Stomach (tissue), 19 donors: ENCODE measurements at regions of chr5 and their contacts with region 1.

Region 1: DNA sequence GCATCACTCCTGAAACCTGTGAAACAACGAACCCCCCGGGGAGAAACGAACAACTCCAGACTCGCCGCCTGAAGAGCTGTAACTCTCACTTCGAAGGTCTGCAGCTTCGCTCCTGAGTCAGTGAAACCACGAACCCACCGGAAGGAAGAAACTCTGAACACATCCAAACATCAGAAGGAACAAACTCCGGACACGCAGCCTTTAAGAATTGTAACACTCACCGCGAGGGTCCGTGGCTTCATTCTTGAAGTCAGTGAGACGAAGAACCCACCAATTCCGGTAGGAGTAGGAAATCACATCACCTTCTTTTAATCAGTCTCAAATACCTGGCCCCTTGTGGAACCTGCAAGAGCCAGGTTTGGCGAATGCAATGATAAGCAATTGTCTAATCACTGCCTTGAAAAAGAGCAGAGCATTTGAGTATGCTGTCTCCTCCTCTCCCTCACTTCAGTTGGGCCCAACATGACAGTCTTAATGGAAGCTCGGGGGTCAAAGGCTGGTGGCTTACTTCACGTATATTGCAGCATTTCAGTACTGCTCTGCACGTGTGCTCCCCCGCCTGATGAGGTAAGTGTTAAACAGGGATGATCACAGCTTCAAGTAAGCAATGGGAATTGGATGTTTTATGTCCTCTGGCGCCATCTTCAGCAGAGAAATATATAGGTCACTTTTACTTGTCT is 473 bp downstream of the IRGM start:
- DNase-seq: peak in 1 of 2 donors; percentile 93
- H3K4me3 ChIP-seq: no peak overlapping the region
- H3K27ac ChIP-seq: peak overlapping the region in 1 of 5 donors; percentile 0
- H3K4me1 ChIP-seq: peaks cover 0 to 9% (median 3%) of the 10 kb centered on the region in 4 donors
- H3K27me3 ChIP-seq: no peaks in the 10 kb centered on the region
- CTCF ChIP-seq: peak in 5 of 7 experiments; percentile 34 to 76 (median 56)
- EP300 ChIP-seq: no peak
- POLR2A ChIP-seq: no peak

Region 2: GRCh38 chr5:150559686-150560085 is 287.1 kb before region 1 on chr5:
- intact Hi-C with region 1: loop called (anchors 10 kb)
- DNase-seq: no peak
- H3K4me3 ChIP-seq: no peak overlapping the region
- H3K27ac ChIP-seq: no peak overlapping the region
- H3K4me1 ChIP-seq: peaks cover 0 to 16% (median 7%) of the 10 kb centered on the region in 4 donors
- H3K27me3 ChIP-seq: no peaks in the 10 kb centered on the region
- CTCF ChIP-seq: no peak
- EP300 ChIP-seq: no peak
- POLR2A ChIP-seq: no peak

Region 3: GRCh38 chr5:151223469-151224264 is 376.9 kb after region 1 on chr5 and contains the start of gene CCDC69:
- intact Hi-C with region 1: no loop called
- DNase-seq: peak; percentile 78 to 92
- H3K4me3 ChIP-seq: peak within 1 kb of the TSS; percentile 73 to 95 (median 82)
- H3K27ac ChIP-seq: peak within 1 kb of the TSS; percentile 80 to 94 (median 87)
- H3K4me1 ChIP-seq: peaks cover 20 to 55% (median 41%) of the 10 kb centered on the region in 4 donors
- H3K27me3 ChIP-seq: no peaks in the 10 kb centered on the region
- CTCF ChIP-seq: peak in 1 of 7 experiments; percentile 18
- EP300 ChIP-seq: no peak
- POLR2A ChIP-seq: no peak
- total RNA-seq, gene CCDC69: 5.5 to 173 (median 36.2) TPM